ENCODE measurements at regions of chr20 and their contacts with region 1.

Region 1: GRCh38 chr20:49219089-49219923 is at the start of gene DDX27:
- DNase-seq: peak; percentile 89 to 99
- H3K4me3 ChIP-seq: peak within 1 kb of the TSS; percentile 80 to 87
- H3K27ac ChIP-seq: peak within 1 kb of the TSS; percentile 81 to 88
- H3K4me1 ChIP-seq: peaks cover 3 to 11% of the 10 kb centered on the region in 2 donors
- H3K27me3 ChIP-seq: no peaks in the 10 kb centered on the region
- CTCF ChIP-seq: no peak
- total RNA-seq, gene DDX27: 17.3 TPM

Region 2: GRCh38 chr20:49046087-49046900 is 173.0 kb before region 1 on chr20 and contains the start of gene CSE1L:
- intact Hi-C with region 1: loop called (anchors 2 kb)
- DNase-seq: peak; percentile 87 to 96
- H3K4me3 ChIP-seq: peak within 1 kb of the TSS; percentile 91 to 98
- H3K27ac ChIP-seq: peak within 1 kb of the TSS; percentile 88 to 95
- H3K4me1 ChIP-seq: peaks cover 6 to 15% of the 10 kb centered on the region in 2 donors
- H3K27me3 ChIP-seq: no peaks in the 10 kb centered on the region
- CTCF ChIP-seq: peak in 1 of 3 experiments; percentile 27
- total RNA-seq, gene CSE1L: 13.6 TPM

Region 3: DNA sequence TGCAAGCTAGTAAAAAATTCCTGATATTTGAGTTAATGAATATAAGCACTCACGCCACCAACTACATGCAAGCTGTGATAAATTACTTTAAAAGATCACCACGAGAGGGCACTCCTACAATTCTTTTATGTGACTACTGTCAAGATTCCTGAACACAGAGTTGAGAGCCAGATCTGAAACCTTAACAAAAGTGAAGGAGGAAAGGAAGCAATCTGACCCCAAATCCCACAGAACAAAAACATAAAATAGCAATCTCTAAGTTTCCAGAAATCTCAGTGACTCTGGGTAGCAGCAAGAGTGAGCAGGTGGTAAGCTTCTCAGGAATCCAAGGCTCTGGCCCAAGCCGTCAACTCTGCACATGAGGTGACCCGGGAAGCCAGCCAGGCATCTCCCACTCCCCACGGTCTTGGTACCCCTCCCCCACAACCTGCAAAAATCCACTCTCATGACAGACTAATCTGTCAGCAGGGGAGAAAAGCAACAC is 86.3 kb before region 1 on chr20:
- intact Hi-C with region 1: loop called (anchors 1 kb)
- DNase-seq: no peak
- H3K4me3 ChIP-seq: no peak overlapping the region
- H3K27ac ChIP-seq: peak overlapping the region in 1 of 2 donors; percentile 17
- H3K4me1 ChIP-seq: peaks cover 0 to 3% of the 10 kb centered on the region in 2 donors
- H3K27me3 ChIP-seq: no peaks in the 10 kb centered on the region
- CTCF ChIP-seq: peak; percentile 41 to 68 (median 56)

Region 4: DNA sequence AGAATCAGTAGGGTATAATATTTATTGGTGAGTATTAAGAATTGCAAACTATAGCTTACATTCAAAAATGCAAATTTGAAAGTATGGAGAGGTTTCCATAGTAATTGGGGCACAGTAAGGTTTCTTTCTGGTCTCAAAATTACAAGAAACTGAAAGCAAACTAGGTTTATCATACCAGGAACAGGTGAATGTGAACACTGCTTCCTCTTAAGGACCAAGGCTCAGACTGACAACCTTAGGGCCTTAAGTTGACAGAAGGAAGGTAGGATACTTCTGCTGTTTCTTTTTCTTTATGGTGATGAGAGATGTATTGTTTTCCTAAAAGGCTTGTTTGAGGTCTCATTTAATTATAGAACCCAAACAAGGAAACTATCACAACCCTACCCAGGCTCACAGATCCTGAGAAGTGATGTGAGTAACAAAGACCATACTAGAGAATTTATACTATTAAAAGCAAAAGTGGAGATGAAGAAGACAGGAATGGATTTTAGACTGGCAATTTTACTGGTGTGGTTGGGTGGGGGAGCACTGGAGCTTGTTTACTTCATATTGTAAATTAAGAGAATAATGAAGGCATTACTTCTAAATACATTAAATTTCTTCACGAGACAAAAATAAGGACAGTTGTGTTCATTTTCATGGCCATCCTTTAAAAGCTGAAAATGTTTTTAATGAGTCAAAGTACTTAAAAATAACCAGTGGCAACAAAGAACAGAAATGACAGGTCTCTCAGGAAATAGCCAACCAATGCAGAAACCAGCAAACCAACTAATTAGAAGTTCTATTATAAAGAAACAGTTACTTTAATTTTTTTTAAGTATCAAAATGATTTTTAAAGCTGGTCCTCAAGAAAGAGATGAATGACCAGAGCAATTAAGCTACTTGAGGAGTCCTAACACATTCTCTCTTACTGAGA is 52.5 kb before region 1 on chr20:
- intact Hi-C with region 1: loop called (anchors 5 kb)
- DNase-seq: no peak
- H3K4me3 ChIP-seq: peak overlapping the region in 1 of 2 donors; percentile 10
- H3K27ac ChIP-seq: peak overlapping the region; percentile 64 to 68
- H3K4me1 ChIP-seq: peaks cover 2 to 23% of the 10 kb centered on the region in 2 donors
- H3K27me3 ChIP-seq: no peaks in the 10 kb centered on the region
- CTCF ChIP-seq: no peak

Region 5: DNA sequence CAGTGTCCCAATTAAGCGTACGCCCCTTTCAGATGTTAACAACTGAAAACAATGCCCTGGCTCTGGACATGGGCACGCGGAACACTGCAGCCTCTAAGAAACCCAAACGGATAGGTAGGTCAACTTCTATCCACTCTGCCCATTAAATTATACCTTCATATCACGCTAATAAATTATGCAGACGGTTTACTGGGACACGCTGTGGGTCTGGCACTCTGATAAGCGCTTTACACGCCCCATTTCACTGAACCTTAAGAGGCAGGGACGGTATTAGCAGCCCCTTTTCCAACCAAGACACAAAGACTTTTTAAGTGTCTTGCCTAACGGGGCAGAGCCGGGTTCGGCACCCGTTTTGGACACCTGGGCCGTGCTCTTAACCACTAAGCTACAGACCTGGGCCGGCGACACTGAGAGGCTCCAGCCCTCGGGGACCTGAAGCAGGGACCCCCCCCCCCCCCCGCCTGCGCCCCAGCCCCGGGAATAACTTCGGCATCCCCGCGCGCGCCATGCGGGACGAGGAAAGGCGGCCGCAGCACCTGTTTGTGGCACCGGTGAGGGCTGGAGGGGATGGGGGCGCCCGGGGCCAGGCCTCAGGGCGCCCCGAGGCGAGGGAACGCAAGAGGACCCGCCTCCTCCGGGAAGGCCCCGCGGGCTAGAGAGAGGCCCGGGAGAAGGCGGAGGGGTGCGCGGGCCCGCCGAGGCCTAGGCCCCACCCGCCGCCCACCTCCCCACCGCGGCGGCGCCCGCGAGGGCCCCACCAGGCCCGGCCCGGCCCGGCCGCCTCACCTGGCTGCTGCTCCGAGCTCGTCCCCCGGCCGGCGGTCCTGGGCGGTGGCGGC is 31.8 kb before region 1 on chr20:
- intact Hi-C with region 1: loop called (anchors 1 kb)
- DNase-seq: no peak
- H3K4me3 ChIP-seq: peak overlapping the region; percentile 92 to 97
- H3K27ac ChIP-seq: peak overlapping the region; percentile 93 to 98
- H3K4me1 ChIP-seq: peaks cover 0 to 7% of the 10 kb centered on the region in 2 donors
- H3K27me3 ChIP-seq: no peaks in the 10 kb centered on the region
- CTCF ChIP-seq: no peak

Region 6: DNA sequence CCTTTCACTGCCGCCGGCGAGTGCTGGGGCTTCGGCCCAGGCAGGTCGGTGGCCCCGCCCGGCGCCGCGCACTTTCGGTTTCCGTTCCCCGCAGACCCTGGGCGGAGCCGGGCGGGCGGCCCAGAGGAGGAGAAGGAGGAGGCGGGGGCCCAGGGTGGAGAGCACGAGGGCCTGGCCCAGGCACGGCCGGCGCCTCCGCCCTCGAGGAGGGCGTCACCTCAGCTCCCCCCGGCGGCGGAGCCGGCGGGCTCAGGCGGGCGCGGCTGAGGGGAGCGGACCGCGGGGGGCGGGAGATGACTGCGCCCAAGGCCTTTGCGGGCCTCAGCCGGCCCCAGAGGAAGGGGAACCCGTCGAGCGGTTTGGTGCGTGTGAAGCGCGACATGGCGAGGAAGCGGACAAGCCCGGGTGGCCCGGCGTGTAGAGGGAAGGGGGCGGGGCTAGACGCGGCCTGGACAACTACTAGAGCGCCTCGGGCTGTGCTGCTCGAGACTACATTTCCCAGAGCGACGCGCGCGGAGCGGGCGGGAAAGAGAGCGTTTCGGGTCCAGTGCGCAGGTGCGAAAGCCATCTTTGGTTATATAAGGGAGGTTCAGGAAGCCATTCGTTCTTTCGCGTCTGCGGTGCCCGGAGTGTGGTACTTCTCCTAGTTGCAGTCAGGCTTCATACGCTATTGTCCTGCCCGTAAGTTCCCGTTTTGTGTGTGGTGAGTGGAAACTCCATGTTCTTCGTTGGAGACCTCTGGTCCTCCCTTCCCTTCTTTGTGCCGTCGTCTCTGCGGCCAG is 58.9 kb after region 1 on chr20 and contains the start of gene ZNFX1:
- intact Hi-C with region 1: loop called (anchors 1 kb)
- DNase-seq: peak; percentile 95 to 99
- H3K4me3 ChIP-seq: peak within 1 kb of the TSS; percentile 75 to 98
- H3K27ac ChIP-seq: peak within 1 kb of the TSS; percentile 94 to 99
- H3K4me1 ChIP-seq: peaks cover 21 to 26% of the 10 kb centered on the region in 2 donors
- H3K27me3 ChIP-seq: no peaks in the 10 kb centered on the region
- CTCF ChIP-seq: no peak
- total RNA-seq, gene ZNFX1: 49.1 TPM